HepG2 (cell line): ENCODE measurements at regions of chr5 and their contacts with region 1.

Region 1: GRCh38 chr5:77981818-77982217 is 205.7 kb upstream of the TBCA start:
- DNase-seq: no peak
- ATAC-seq: no peak
- H3K4me3 ChIP-seq: no peak overlapping the region
- H3K27ac ChIP-seq: no peak overlapping the region
- H3K4me1 ChIP-seq: peaks cover 26% of the 10 kb centered on the region
- H3K27me3 ChIP-seq: no peaks in the 10 kb centered on the region
- CTCF ChIP-seq: no peak
- EP300 ChIP-seq: no peak
- POLR2A ChIP-seq: no peak
- RAD21 ChIP-seq: no peak

Region 2: DNA sequence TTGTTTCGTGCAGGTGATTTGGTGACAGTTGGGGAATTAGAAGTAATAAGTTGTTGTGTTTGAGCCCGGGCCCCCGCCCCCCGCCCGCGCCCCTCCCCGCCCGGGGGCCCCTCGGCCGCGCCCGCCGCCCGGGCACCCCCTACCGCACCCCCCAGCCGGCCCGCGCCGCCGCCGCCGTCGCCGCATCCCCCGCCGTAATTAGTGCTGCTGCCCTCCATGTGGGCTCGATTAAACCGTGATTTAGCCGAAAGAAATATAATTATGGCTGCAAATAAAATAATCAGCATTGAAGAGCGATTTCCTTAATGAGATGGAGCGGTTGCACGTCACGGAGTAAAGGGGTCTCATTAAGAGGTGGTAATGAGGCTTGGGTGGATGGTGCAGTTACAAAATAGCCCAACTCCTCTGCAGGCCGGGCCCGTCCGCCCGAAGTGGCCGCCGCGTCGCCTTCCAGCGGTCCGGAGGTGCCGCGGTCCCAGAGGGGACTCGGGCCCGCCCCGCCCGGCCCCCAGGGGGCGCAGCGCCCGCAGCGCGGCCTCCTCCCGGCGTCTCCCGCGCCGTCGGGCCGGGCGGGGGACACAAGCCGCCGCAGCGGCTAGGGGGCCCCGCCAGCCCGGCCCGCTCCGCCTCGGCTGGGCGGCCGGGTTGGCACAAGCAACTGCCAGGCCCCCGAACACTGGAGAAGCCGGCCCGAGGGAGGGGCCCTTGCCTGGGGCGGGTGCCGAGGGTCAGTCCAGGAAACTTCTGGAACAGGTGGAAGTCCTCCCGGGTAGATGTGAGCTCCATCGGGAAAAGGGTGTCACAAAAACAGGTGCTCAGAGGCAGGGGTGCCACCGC is 336.4 kb before region 1 on chr5:
- CTCF ChIA-PET with region 1: no interaction called
- POLR2A ChIA-PET with region 1: no interaction called
- in situ Hi-C with region 1: loop called (anchors 10 kb)
- intact Hi-C with region 1: no loop called
- DNase-seq: peak; percentile 13
- ATAC-seq: peak; percentile 98
- H3K4me3 ChIP-seq: peak overlapping the region; percentile 6 to 59 (median 49); a peak in 2 of 6 replicates
- H3K27ac ChIP-seq: no peak overlapping the region
- H3K4me1 ChIP-seq: no peaks in the 10 kb centered on the region
- H3K27me3 ChIP-seq: peaks cover 5 to 51% of the 10 kb centered on the region in 2 experiments; a peak in 4 of 5 replicates
- CTCF ChIP-seq: peak; percentile 54; the same call in 1 of the 2 replicates
- EP300 ChIP-seq: no peak
- POLR2A ChIP-seq: no peak
- RAD21 ChIP-seq: peak; percentile 88

Region 3: GRCh38 chr5:77733130-77733529 is 248.7 kb before region 1 on chr5:
- CTCF ChIA-PET with region 1: no interaction called
- POLR2A ChIA-PET with region 1: no interaction called
- in situ Hi-C with region 1: no loop called
- intact Hi-C with region 1: no loop called
- DNase-seq: no peak
- ATAC-seq: no peak
- H3K4me3 ChIP-seq: no peak overlapping the region
- H3K27ac ChIP-seq: no peak overlapping the region
- H3K4me1 ChIP-seq: no peaks in the 10 kb centered on the region
- H3K27me3 ChIP-seq: no peaks in the 10 kb centered on the region
- CTCF ChIP-seq: no peak
- EP300 ChIP-seq: no peak
- POLR2A ChIP-seq: no peak
- RAD21 ChIP-seq: no peak

Region 4: DNA sequence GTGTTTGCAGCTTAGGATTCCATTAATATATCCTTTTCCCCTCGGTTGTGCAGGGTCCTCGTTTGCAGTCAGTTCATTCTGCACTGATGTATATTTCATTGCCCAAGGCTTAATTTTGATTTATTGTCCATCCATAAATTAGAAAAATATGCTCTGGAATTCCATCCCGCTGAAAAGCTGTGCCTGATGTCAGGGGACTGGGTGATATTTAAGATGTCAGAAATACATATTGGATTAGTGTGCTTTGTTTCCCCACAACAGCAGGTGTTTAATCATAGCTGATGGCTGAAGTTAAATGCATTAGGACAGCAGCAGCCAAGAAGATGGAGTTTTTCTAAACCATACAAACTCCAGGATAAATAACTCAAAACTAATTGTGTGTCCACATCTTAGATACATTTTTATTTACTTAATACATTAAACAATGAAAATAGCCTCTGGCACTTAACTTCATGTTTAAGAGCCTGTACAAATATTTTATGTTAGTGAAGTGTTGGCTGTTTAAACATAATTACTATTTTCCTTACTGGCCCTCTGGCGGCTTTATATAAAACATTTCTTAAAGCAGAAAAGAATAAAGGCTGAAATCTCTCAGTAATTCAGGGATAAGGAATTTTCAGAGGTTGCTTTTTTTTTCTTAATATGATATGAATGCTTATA is 35.3 kb before region 1 on chr5:
- CTCF ChIA-PET with region 1: no interaction called
- POLR2A ChIA-PET with region 1: no interaction called
- in situ Hi-C with region 1: no loop called
- intact Hi-C with region 1: no loop called
- DNase-seq: no peak
- ATAC-seq: no peak
- H3K4me3 ChIP-seq: no peak overlapping the region
- H3K27ac ChIP-seq: no peak overlapping the region
- H3K4me1 ChIP-seq: no peaks in the 10 kb centered on the region
- H3K27me3 ChIP-seq: peaks cover 0 to 1% of the 10 kb centered on the region in 2 experiments; a peak in 2 of 5 replicates
- CTCF ChIP-seq: no peak
- EP300 ChIP-seq: no peak
- POLR2A ChIP-seq: no peak
- RAD21 ChIP-seq: no peak

Region 5: DNA sequence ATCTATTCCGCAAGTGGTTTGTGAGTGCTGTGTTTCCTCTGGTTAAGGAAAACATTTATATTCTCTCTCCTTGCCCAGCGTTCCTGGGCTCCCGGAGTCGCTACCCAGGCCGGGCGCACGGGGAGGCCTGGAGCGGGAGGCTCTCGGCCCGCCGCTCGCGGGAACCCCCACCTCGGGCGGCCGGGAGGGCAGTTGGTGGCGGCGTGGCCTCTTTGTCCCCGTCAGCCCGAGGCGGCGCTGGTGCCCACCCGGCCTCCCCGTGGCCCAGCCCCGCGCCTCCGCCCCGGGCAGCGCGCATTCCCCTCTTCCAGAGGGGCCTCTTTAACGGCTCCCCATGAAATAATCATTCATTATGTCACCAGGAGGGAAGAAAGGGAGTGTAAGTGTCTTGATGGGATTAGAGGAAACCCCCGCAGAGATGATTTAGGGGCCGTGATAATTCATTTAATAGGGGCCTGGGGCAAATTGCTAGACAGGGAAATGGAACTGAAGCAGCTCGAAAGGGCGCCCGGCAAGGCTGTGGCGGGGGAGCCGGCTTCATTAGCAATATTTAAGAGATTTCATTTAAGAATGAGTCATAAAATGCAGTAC is 23.8 kb before region 1 on chr5:
- CTCF ChIA-PET with region 1: no interaction called
- POLR2A ChIA-PET with region 1: no interaction called
- in situ Hi-C with region 1: no loop called
- intact Hi-C with region 1: no loop called
- DNase-seq: no peak
- ATAC-seq: no peak
- H3K4me3 ChIP-seq: no peak overlapping the region
- H3K27ac ChIP-seq: no peak overlapping the region
- H3K4me1 ChIP-seq: no peaks in the 10 kb centered on the region
- H3K27me3 ChIP-seq: peaks cover 0 to 9% of the 10 kb centered on the region in 2 experiments; a peak in 2 of 5 replicates
- CTCF ChIP-seq: no peak
- EP300 ChIP-seq: no peak
- POLR2A ChIP-seq: no peak
- RAD21 ChIP-seq: no peak